ENCODE measurements at regions of chr14 and their contacts with region 1.

Region 1: DNA sequence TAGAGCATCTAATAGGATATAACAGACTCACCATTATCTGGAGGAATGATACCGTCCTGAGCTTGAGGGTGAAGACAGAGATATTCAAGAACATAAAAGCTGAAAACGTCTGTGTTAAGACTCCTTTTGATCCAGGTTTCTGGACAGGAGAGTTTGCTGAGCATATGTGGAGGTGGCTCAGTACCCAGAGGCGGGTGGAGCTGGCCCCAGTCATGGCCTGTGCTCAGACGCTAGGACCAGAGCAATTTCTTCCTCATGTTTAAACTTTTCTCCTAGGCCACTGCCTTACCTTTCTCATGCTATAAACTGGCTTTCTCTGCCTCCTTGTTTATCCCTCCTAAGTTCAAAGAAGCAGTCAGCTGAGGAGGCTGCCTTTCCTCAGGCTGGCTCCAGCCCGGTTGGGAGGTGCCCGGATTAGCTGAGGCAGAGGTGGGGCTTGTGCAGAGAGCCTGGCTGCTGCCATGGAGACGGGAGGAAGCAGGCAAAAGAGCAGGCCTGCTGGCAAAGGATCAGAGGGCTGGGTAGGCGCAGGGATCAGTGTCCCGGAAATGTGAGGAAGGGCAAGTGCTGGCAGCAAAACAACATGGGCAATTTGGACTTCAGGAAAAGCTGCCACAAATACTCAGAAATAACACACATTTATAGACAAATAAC is 13.7 kb downstream of the COA8 start:
- DNase-seq: peak; percentile 46 to 65
- ATAC-seq: peak; percentile 61 to 71
- H3K4me3 ChIP-seq: no peak overlapping the region
- H3K27ac ChIP-seq: peak overlapping the region; percentile 42 to 59 (median 52)
- H3K4me1 ChIP-seq: peaks cover 8 to 18% of the 10 kb centered on the region in 2 donors
- H3K27me3 ChIP-seq: no peaks in the 10 kb centered on the region
- CTCF ChIP-seq: no peak
- POLR2A ChIP-seq: no peak

Region 2: GRCh38 chr14:103910262-103910935 is 333.9 kb after region 1 on chr14:
- in situ Hi-C with region 1: loop called in 1 of 4 experiments (anchors 25 kb)
- intact Hi-C with region 1: loop called (anchors 10 kb)
- DNase-seq: peak; percentile 38 to 74
- ATAC-seq: peak; percentile 82 to 96
- H3K4me3 ChIP-seq: no peak overlapping the region
- H3K27ac ChIP-seq: no peak overlapping the region
- H3K4me1 ChIP-seq: peaks cover 7 to 9% of the 10 kb centered on the region in 2 donors
- H3K27me3 ChIP-seq: no peaks in the 10 kb centered on the region
- CTCF ChIP-seq: peak; percentile 63 to 82 (median 76)
- POLR2A ChIP-seq: no peak

Measured in gastrocnemius medialis (tissue), 4 donors.